Activated CD4-positive, alpha-beta T cell treated with anti-CD3 and anti-CD28 coated beads, Interleukin-2, amount 10 ng/mL, durations not matched to agents 24 days and 14 days (primary cell): ENCODE measurements at regions of chr19 and their contacts with region 1.

Region 1: DNA sequence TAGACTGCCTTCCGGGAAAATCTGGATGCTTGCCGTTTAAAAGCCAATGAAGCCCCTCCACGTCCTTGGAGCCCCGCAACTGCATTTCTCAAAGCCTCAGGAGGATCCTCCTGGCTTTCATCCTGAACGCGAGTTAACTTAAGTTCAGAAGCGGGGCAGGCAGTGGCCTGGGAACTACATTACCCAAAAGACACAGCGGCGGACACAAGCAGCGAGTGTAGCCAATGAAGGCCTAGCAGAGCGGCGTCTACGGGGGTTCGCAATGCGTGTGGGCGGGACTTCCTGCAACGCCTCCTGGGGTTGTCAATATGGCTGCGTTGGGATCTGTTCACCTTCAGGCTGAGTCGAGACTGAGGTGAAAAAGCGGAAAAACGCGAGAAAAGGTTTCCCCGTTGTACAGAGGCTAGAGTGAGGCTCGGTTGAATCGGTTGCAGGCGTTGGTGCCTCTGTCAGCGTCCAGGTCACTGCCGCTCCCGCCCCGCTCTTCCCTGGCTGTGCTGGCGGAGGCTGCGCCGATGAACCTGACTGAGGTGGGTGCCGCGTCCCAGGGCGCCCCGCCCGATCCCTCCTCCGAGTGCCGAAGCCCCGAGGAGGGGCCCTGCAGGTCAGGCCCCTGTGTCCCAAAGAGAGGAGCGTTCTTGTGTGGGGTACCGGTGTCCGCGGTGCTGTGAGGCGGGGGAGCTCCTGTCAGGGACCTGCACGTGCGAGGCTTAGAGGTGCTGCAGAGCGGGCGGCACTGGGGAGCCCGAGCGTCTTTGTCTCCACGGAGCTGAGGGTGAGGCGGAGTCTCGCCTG is at the start of gene ZNF17:
- DNase-seq: peak; percentile 97
- H3K4me3 Mint-ChIP-seq: peak within 1 kb of the TSS; percentile 94
- H3K27ac Mint-ChIP-seq: peak within 1 kb of the TSS; percentile 80
- H3K4me1 Mint-ChIP-seq: peaks cover 14% of the 10 kb centered on the region
- H3K27me3 Mint-ChIP-seq: no peaks in the 10 kb centered on the region
- total RNA-seq, gene ZNF17: 7.4 and 7.8 TPM in 2 replicates

Region 2: GRCh38 chr19:57269515-57270250 is 141.4 kb before region 1 on chr19:
- intact Hi-C with region 1: no loop called
- DNase-seq: no peak
- H3K4me3 Mint-ChIP-seq: no peak overlapping the region
- H3K27ac Mint-ChIP-seq: no peak overlapping the region
- H3K4me1 Mint-ChIP-seq: no peaks in the 10 kb centered on the region
- H3K27me3 Mint-ChIP-seq: no peaks in the 10 kb centered on the region

Region 3: DNA sequence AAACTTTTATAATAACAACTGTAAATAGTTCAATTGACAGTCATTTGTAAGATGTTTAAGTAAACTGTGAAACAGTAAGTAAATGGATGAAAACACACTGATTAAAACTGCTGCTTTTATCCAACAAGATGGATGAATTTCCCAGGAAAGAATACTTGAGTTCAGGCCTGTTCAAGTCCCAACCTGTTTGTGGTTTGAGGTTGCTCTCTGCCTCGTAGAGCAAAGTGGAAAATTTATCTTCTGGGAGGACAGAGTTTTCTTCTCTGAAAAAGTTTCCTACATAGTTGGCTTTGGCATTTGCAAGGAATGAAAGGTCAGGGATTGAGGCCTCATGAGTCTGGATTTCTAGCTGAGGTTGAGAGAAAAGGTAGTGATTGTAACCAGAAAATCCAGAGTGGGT is 106.0 kb before region 1 on chr19:
- intact Hi-C with region 1: no loop called
- DNase-seq: no peak
- H3K4me3 Mint-ChIP-seq: no peak overlapping the region
- H3K27ac Mint-ChIP-seq: no peak overlapping the region
- H3K4me1 Mint-ChIP-seq: no peaks in the 10 kb centered on the region
- H3K27me3 Mint-ChIP-seq: no peaks in the 10 kb centered on the region

Region 4: DNA sequence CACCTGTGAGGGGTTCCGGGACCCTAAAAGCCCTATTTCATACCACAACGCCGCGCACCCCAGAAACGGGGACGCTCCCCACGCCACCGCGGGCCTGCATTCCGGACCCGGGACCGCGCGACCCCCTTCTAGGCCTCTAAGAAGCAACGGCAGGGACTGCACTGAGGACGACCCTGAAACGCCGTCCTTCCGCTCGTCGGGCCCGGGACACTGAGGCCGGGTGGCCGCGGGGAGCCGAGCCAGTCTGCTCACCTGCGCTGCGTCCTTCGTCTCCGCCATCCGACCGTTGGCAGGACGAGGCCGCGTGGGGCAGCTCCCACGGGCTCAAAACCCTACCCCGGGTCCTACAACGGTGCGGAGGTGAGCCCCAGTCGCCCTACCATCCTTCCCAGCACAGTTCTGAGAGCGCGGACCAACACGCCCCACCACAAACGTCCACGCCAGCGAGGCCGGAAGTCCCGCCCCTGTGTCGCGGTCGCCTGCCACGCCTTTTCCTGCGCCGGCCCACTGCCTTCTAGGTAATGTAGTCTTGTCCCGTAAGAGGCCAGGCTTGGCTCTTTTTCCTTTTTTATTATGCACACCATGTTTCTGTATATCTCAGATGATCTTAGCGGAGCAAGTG is 148.4 kb after region 1 on chr19 and contains the start of gene ZNF550:
- intact Hi-C with region 1: loop called (anchors 1 kb)
- DNase-seq: peak; percentile 96
- H3K4me3 Mint-ChIP-seq: peak within 1 kb of the TSS; percentile 99
- H3K27ac Mint-ChIP-seq: peak within 1 kb of the TSS; percentile 94
- H3K4me1 Mint-ChIP-seq: peaks cover 23% of the 10 kb centered on the region
- H3K27me3 Mint-ChIP-seq: no peaks in the 10 kb centered on the region
- total RNA-seq, gene ZNF550: 7.4 and 9.3 TPM in 2 replicates

Region 5: DNA sequence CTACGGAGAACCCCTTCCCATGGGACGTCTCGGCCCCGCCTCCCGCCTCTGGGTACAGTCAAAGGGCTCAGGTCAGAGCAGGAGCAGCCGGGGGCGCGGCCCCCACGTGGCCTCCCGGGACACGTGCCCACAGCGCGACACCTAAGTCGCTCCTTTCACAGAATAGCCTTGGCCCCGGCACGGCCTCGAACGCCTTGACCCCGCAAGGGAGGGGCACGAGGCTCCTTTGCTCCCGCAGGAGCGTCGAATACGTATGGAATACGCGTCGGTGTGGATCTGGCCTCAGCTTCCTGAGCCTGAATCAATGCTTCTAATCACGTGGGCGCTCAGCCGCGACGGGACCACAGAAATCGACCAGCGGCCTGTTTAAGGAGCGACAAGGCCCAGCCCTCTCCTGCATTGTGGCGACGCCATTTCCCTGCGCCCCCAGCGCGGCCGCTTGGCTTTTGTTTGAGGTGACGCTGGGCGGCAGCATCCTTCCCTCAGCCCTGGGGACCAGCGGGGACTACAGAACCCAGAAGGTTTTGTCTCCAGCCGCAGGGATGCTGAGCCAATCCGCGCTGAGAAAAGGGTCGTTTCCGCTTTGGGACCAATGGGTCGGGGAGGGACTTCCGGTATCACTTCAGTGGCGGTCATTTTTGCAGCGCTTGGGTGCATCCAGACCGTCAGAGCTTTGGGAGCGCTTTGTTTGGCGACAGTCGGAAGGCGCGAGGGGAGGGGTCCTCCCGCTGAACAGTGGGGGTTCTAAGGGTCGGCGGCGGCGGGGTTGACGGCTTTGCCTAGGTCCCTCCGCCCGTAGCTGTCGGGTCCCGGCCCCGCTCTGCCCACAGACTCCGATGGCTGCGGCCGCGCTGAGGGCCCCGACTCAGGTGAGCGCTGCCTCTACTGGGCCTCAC is 172.7 kb after region 1 on chr19 and contains the start of gene ZIK1:
- intact Hi-C with region 1: loop called (anchors 5 kb)
- DNase-seq: peak; percentile 94
- H3K4me3 Mint-ChIP-seq: peak within 1 kb of the TSS; percentile 92
- H3K27ac Mint-ChIP-seq: peak within 1 kb of the TSS; percentile 72
- H3K4me1 Mint-ChIP-seq: peaks cover 16% of the 10 kb centered on the region
- H3K27me3 Mint-ChIP-seq: no peaks in the 10 kb centered on the region
- total RNA-seq, gene ZIK1: 2.8 and 4.1 TPM in 2 replicates

Region 6: GRCh38 chr19:58182989-58183816 is 772.1 kb after region 1 on chr19 and contains the start of gene ZNF274:
- intact Hi-C with region 1: loop called (anchors 1 kb)
- DNase-seq: peak; percentile 98
- H3K4me3 Mint-ChIP-seq: peak within 1 kb of the TSS; percentile 97
- H3K27ac Mint-ChIP-seq: peak within 1 kb of the TSS; percentile 96
- H3K4me1 Mint-ChIP-seq: peaks cover 13% of the 10 kb centered on the region
- H3K27me3 Mint-ChIP-seq: no peaks in the 10 kb centered on the region
- total RNA-seq, gene ZNF274: 19.4 and 19.8 TPM in 2 replicates